ENCODE measurements at regions of chr16 and their contacts with region 1.

Region 1: DNA sequence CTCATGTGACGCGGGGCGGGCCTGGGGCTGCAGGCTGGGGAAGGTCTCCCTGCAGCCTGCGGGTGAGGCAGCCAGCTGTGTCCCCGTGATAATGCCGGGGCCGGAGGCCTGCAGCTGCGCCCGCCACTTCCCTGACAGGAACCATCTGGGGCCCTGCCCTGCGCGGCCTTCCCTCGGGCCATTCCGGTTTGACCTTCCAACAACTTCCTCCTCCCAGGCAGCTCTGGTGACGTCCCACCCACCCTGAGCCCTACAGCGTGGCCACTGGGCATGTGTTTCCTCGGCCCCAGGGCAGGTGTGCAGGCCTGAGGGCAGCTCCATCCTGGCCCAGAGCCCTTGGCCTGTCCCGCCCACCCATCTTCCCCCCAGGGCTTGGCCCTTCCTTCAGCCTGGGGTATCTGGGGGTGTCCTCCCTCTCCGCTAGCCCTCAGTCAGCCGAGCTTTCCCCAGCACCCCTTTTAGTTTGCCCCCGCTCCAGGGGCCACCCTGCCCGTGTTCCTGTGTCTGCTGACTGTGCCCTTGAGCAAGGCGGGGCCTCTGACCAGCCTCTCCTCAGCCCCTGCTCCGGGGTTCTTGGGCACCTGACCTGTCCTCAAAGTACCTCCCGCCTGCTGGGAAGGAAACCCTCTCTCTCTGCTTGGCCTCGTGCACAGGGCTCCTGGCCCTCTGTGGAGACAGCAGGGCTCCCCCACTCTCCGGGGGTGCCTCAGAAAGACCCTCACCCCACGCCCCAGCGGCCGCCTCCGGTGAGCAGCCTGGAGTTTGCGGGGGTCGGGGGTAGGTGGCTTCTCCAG is at the start of gene CBFA2T3:
- DNase-seq: no peak
- ATAC-seq: peak; percentile 6
- H3K4me3 Mint-ChIP-seq: peak within 1 kb of the TSS; percentile 86
- H3K27ac Mint-ChIP-seq: peak within 1 kb of the TSS; percentile 83
- H3K4me1 Mint-ChIP-seq: peaks cover 91% of the 10 kb centered on the region
- H3K27me3 Mint-ChIP-seq: no peaks in the 10 kb centered on the region
- CTCF ChIP-seq: no peak
- total RNA-seq, gene CBFA2T3: 50.8 and 63.3 TPM in 2 replicates

Region 2: GRCh38 chr16:89004209-89004831 is 27.1 kb after region 1 on chr16:
- CTCF ChIA-PET with region 1: no interaction called
- POLR2A ChIA-PET with region 1: no interaction called
- intact Hi-C with region 1: loop called (anchors 2 kb)
- DNase-seq: no peak
- ATAC-seq: peak; percentile 40
- H3K4me3 Mint-ChIP-seq: peak overlapping the region; percentile 8
- H3K27ac Mint-ChIP-seq: no peak overlapping the region
- H3K4me1 Mint-ChIP-seq: peaks cover 27% of the 10 kb centered on the region
- H3K27me3 Mint-ChIP-seq: peaks cover 31% of the 10 kb centered on the region
- CTCF ChIP-seq: no peak

Region 3: DNA sequence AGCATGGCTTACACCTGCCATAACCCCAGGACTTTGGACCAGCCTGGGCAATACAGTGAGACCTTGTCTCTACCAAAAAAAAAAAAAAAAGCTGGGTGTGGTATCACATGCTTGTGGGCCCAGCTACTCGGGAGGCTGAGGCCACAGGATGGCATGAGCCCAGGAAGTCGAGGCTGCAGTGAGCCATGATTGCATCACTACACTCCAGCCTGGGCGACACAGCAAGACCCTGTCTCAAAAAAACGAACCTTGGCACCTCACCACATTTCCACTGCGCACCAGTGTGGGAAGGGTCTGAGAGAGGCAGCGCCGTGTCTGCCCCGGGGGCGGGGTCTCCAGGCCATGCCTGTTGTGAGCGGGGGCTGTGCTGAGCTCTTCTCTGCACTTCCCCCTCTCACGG is 122.7 kb after region 1 on chr16:
- CTCF ChIA-PET with region 1: interaction called, 3 read pairs
- POLR2A ChIA-PET with region 1: interaction called, 20 read pairs
- intact Hi-C with region 1: no loop called
- DNase-seq: no peak
- ATAC-seq: no peak
- H3K4me3 Mint-ChIP-seq: no peak overlapping the region
- H3K27ac Mint-ChIP-seq: no peak overlapping the region
- H3K4me1 Mint-ChIP-seq: peaks cover 54% of the 10 kb centered on the region
- H3K27me3 Mint-ChIP-seq: no peaks in the 10 kb centered on the region
- CTCF ChIP-seq: no peak

Measured in activated B cell treated with CpG ODN at 0.5 μM for 24 hours (primary cell).